Caco-2 (cell line): ENCODE measurements at regions of chr14 and their contacts with region 1.

Region 1: GRCh38 chr14:66495218-66496098 is 9.3 kb downstream of the CCDC196 start:
- DNase-seq: peak; percentile 24 to 48
- H3K4me3 ChIP-seq: no peak overlapping the region
- H3K4me3 Mint-ChIP-seq: no peak overlapping the region
- H3K27ac Mint-ChIP-seq: no peak overlapping the region
- H3K4me1 ChIP-seq: no peaks in the 10 kb centered on the region
- H3K4me1 Mint-ChIP-seq: no peaks in the 10 kb centered on the region
- H3K27me3 ChIP-seq: no peaks in the 10 kb centered on the region; the same call in 1 of the 2 replicates
- H3K27me3 Mint-ChIP-seq: peaks cover 9% of the 10 kb centered on the region
- CTCF ChIP-seq: peak; percentile 49 to 76

Region 2: DNA sequence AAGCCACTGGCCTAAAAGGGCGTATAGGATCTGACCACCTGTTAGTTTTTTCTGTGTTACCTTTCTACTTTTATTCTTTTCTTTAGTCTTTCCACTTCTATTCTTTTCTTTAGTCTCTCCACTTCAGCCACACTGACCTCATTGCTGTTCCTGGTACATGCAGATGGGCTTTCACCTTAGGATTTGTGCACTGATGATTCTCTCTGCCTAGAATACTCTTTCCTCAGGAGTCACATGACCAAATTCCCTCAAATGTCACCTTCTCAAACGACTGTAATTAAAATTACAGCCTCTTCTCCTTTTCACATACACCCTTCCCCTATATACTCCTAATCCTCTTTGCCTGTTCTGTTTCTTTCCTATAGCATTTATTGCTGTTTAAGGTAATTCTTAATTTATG is 48.5 kb after region 1 on chr14:
- CTCF ChIA-PET with region 1: no interaction called
- POLR2A ChIA-PET with region 1: no interaction called
- intact Hi-C with region 1: loop called (anchors 1 kb)
- DNase-seq: no peak
- H3K4me3 ChIP-seq: no peak overlapping the region
- H3K4me3 Mint-ChIP-seq: no peak overlapping the region
- H3K27ac Mint-ChIP-seq: no peak overlapping the region
- H3K4me1 ChIP-seq: no peaks in the 10 kb centered on the region
- H3K4me1 Mint-ChIP-seq: no peaks in the 10 kb centered on the region
- H3K27me3 ChIP-seq: no peaks in the 10 kb centered on the region
- H3K27me3 Mint-ChIP-seq: no peaks in the 10 kb centered on the region
- CTCF ChIP-seq: no peak

Region 3: GRCh38 chr14:66624299-66624937 is 129.0 kb after region 1 on chr14:
- CTCF ChIA-PET with region 1: no interaction called
- POLR2A ChIA-PET with region 1: no interaction called
- intact Hi-C with region 1: loop called (anchors 5 kb)
- DNase-seq: peak; percentile 55 to 61
- H3K4me3 ChIP-seq: no peak overlapping the region
- H3K4me3 Mint-ChIP-seq: no peak overlapping the region
- H3K27ac Mint-ChIP-seq: no peak overlapping the region
- H3K4me1 ChIP-seq: no peaks in the 10 kb centered on the region
- H3K4me1 Mint-ChIP-seq: peaks cover 6% of the 10 kb centered on the region
- H3K27me3 ChIP-seq: no peaks in the 10 kb centered on the region
- H3K27me3 Mint-ChIP-seq: no peaks in the 10 kb centered on the region
- CTCF ChIP-seq: peak in 1 of 2 experiments; percentile 68

Region 4: GRCh38 chr14:66662374-66662773 is 166.9 kb after region 1 on chr14:
- CTCF ChIA-PET with region 1: no interaction called
- POLR2A ChIA-PET with region 1: no interaction called
- intact Hi-C with region 1: loop called (anchors 1 kb)
- DNase-seq: peak in 1 of 2 experiments; percentile 36
- H3K4me3 ChIP-seq: no peak overlapping the region
- H3K4me3 Mint-ChIP-seq: no peak overlapping the region
- H3K27ac Mint-ChIP-seq: no peak overlapping the region
- H3K4me1 ChIP-seq: no peaks in the 10 kb centered on the region
- H3K4me1 Mint-ChIP-seq: no peaks in the 10 kb centered on the region
- H3K27me3 ChIP-seq: no peaks in the 10 kb centered on the region
- H3K27me3 Mint-ChIP-seq: no peaks in the 10 kb centered on the region
- CTCF ChIP-seq: peak; percentile 40 to 58

Region 5: DNA sequence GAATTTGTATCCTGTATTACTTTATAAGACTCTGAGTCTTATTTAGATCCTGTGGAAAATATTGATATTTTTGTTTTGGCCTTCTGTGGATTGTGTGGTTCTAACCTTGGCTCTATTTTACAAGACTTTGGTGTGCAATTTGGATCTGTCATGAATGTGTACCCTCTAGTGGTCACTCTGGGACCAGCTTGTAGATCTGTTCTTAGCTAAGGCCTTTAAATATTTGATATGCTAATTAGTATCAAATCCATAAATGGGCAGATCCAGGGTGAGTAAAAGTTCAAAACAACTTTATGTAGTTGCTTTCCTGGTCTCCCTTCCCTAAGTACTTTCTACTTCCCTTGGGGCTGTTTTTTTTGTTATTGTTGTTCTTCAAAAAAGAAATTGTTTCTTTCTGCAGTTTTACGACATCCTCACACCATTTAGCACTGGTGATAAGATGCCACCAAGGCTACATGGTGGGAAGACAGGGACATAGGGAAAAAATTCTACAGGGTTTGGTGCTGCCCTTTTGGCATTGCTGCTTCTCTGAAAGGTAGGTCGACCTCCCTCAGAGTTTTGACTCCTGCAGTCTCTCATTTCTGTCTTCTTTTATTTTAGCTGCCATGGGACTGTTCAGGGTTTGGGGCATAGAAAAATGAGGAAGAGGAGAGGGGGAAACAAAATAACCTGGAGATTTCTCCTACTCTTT is 251.0 kb after region 1 on chr14:
- CTCF ChIA-PET with region 1: no interaction called
- POLR2A ChIA-PET with region 1: no interaction called
- intact Hi-C with region 1: loop called (anchors 10 kb)
- DNase-seq: peak in 1 of 2 experiments; percentile 22
- H3K4me3 ChIP-seq: no peak overlapping the region
- H3K4me3 Mint-ChIP-seq: no peak overlapping the region
- H3K27ac Mint-ChIP-seq: no peak overlapping the region
- H3K4me1 ChIP-seq: no peaks in the 10 kb centered on the region
- H3K4me1 Mint-ChIP-seq: no peaks in the 10 kb centered on the region
- H3K27me3 ChIP-seq: no peaks in the 10 kb centered on the region
- H3K27me3 Mint-ChIP-seq: no peaks in the 10 kb centered on the region
- CTCF ChIP-seq: peak; percentile 50 to 61

Region 6: DNA sequence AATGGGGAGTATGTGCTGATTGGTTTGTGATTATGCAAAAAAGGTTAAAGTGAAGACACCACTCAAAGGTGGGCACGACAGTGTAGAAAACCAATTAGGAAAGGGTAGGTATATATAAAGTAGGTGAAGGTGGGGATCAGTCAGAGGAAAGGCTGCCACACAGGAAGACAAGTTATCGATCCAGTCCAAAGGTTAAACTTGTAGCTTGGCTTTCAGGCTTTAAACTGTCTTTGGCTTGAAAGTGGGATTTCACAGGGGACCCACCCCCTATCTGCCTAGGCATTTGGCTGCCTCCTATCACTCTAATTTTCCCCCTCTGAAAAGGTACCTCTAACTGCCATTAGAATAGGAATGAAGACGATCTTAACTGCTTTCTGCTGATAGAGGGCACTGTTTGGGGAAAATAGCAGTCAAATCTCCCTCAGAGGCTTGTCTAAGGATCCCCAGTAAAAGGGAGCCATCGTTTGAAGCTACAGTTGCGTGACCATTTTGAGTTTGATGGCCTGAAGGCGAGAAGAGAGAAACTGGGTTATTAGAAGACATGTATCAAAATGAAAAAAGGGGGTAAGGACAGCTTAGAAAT is 262.7 kb after region 1 on chr14:
- CTCF ChIA-PET with region 1: no interaction called
- POLR2A ChIA-PET with region 1: no interaction called
- intact Hi-C with region 1: no loop called
- DNase-seq: peak in 1 of 2 experiments; percentile 3
- H3K4me3 ChIP-seq: no peak overlapping the region
- H3K4me3 Mint-ChIP-seq: no peak overlapping the region
- H3K27ac Mint-ChIP-seq: no peak overlapping the region
- H3K4me1 ChIP-seq: no peaks in the 10 kb centered on the region
- H3K4me1 Mint-ChIP-seq: no peaks in the 10 kb centered on the region
- H3K27me3 ChIP-seq: no peaks in the 10 kb centered on the region
- H3K27me3 Mint-ChIP-seq: no peaks in the 10 kb centered on the region
- CTCF ChIP-seq: no peak

Region 7: DNA sequence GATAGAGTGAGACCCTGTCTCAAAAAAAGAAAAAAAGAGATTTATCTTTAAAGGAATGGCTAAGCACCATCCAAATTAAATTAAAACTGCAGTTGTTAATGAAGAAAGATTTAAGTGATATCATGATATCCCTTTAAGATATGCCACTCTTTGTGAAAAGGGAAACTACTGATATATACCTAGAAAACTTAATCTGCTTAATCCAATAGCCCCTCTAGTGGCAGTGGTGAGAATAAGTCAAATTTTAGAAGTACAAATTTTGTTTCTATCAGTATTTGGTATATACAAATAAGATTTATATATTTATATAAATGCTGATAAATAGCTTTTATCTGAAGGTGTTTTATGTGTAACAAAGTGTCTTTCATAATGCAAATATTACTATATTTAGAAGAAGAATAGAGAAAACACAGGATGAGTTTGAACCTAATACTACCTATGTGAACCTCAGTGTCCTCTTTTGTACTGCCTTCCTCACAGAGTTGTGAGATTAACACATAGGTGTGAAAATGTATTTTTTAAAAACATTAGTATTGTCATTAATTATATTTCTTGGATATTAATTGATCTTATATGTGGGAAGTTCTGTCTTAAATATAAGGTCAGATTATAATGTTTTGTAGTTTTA is 642.4 kb after region 1 on chr14:
- CTCF ChIA-PET with region 1: no interaction called
- POLR2A ChIA-PET with region 1: no interaction called
- intact Hi-C with region 1: loop called (anchors 10 kb)
- DNase-seq: no peak
- H3K4me3 ChIP-seq: no peak overlapping the region
- H3K4me3 Mint-ChIP-seq: no peak overlapping the region
- H3K27ac Mint-ChIP-seq: no peak overlapping the region
- H3K4me1 ChIP-seq: no peaks in the 10 kb centered on the region
- H3K4me1 Mint-ChIP-seq: no peaks in the 10 kb centered on the region
- H3K27me3 ChIP-seq: no peaks in the 10 kb centered on the region
- H3K27me3 Mint-ChIP-seq: no peaks in the 10 kb centered on the region
- CTCF ChIP-seq: peak; percentile 40 to 55